ENCODE measurements at regions of chr17 and their contacts with region 1.

Region 1: GRCh38 chr17:73192894-73193701 is at the start of gene COG1:
- DNase-seq: peak; percentile 92 to 96 (median 94)
- ATAC-seq: peak; percentile 86
- H3K4me3 ChIP-seq: peak within 1 kb of the TSS; percentile 96
- H3K27ac ChIP-seq: peak within 1 kb of the TSS; percentile 98
- H3K4me1 ChIP-seq: peaks cover 4 to 17% of the 10 kb centered on the region in 2 experiments; a peak in 4 of 5 replicates
- H3K27me3 ChIP-seq: no peaks in the 10 kb centered on the region
- CTCF ChIP-seq: no peak
- EP300 ChIP-seq: no peak
- POLR2A ChIP-seq: peak; percentile 80
- RAD21 ChIP-seq: no peak
- polyA plus RNA-seq, gene COG1: 9.5 to 9.9 TPM

Region 2: DNA sequence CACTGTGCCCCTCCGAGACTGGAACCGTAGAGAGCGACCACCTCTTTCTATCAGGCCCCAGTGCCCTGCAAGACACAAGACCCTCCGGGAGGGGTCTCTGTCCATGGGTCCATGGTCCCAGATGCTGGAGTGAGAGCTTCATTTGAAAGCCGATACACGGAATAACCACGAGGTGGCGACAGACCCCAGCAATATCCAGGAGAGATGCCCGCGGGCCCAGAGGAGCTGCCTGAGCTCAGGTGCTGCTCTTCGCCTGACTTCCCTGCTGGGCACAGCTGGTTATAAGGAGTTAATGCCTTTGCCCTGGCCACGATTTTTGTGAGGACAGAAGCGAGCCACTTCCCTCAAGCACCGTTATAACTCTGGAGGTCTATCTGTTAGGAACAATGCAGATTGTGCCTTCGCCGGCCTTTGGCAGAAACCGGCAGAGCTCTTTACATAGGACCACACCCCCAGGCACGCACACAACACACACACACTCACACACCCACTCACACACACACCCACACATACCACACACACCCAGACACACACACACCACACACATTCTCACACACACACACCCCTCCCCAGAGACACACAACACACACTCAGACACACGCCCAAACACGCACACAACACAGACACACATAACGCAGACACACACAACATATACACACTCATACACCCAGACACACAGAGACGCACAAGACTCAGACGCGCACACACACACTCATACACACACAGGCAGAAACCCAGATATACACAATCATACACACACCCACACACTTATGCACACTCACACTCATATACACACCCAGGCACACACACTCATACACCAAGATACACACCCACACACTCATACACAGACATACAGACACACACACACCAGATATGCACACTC is 635.9 kb before region 1 on chr17:
- CTCF ChIA-PET with region 1: interaction called, 5 read pairs
- POLR2A ChIA-PET with region 1: interaction called, 3 read pairs
- in situ Hi-C with region 1: loop called (anchors 10 kb)
- intact Hi-C with region 1: no loop called
- DNase-seq: peak; percentile 67 to 76 (median 74)
- ATAC-seq: peak; percentile 89
- H3K4me3 ChIP-seq: no peak overlapping the region
- H3K27ac ChIP-seq: no peak overlapping the region
- H3K4me1 ChIP-seq: peaks cover 0 to 4% of the 10 kb centered on the region in 2 experiments; a peak in 1 of 5 replicates
- H3K27me3 ChIP-seq: peaks cover 0 to 7% of the 10 kb centered on the region in 2 experiments; a peak in 1 of 5 replicates
- CTCF ChIP-seq: peak; percentile 83 to 86 (median 85)
- EP300 ChIP-seq: no peak
- POLR2A ChIP-seq: no peak
- RAD21 ChIP-seq: peak; percentile 44 to 77

Region 3: DNA sequence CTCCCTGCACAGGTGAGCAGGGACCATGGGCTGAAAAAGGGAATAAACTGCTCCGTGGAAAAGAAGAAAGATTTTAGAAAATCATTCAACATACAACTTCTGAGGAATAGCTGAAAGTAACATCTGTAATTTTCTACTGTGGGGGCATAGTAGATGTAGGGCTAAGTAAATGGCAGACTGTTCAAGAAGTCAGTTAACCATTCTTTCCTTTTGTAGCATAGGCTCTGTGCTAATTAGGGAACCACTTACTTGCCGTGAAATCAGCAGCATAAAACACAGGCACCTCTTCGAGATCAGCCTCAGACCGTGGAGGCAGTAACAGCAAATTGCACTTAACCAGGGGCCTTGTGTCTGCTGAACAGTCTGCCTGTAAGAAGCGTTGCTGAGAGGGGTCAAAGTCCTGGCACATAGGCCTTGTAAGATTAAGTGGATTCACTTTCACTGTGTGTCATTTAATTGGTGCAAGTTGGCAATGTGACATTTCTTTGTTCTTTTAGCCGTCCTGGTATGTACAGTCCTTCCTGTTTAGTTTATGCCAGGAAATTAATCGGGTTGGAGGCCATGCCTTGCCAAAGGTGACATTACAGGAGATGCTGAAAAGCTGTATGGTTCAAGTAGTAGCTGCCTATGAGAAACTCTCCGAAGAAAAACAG is 10.2 kb after region 1 on chr17:
- CTCF ChIA-PET with region 1: no interaction called
- POLR2A ChIA-PET with region 1: interaction called, 15 read pairs
- in situ Hi-C with region 1: no loop called
- intact Hi-C with region 1: no loop called
- DNase-seq: no peak
- ATAC-seq: no peak
- H3K4me3 ChIP-seq: no peak overlapping the region
- H3K27ac ChIP-seq: no peak overlapping the region
- H3K4me1 ChIP-seq: peaks cover 3 to 8% of the 10 kb centered on the region in 2 experiments; a peak in 3 of 5 replicates
- H3K27me3 ChIP-seq: no peaks in the 10 kb centered on the region
- CTCF ChIP-seq: no peak
- EP300 ChIP-seq: no peak
- POLR2A ChIP-seq: no peak
- RAD21 ChIP-seq: no peak

Region 4: DNA sequence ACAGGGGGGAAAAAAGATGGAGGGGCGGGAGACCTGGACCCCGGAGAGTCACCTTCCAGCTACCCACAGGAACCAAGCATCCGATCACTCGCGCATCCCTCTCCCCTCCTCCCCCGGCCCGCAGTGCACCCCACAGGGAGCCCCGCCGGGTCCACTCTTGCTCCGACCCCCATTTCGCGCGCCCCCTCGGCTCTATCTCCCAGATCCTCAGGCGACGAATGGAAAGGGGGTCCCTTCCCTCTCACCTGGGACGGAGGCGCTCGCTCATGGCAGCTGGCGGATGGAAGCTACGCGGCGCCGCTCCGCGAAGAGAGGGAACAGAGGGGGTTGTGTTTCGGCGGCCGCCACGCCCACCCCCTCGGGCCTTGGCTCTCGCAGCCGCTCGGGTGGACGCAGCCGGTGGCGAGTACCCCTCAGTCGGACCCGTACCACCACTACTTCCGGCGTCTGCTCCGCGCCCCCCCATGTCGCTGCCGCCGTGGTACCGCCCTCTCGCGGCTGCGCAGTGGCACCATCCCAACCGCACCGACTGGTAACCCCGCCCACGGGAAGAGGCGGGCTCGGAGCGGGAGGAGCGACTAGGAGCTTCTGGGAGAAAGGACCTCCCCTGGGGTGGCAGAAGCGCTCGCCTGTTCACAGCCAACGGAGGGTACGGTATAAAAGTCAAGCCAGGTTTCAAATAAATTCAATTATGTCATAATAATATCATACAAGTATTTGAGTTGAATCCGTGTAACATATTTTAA is 38.9 kb after region 1 on chr17:
- CTCF ChIA-PET with region 1: no interaction called
- POLR2A ChIA-PET with region 1: interaction called, 6 read pairs
- in situ Hi-C with region 1: no loop called
- intact Hi-C with region 1: loop called (anchors 2 kb)
- DNase-seq: peak; percentile 96
- ATAC-seq: peak; percentile 85
- H3K4me3 ChIP-seq: peak overlapping the region; percentile 95
- H3K27ac ChIP-seq: peak overlapping the region; percentile 89
- H3K4me1 ChIP-seq: peaks cover 19 to 31% of the 10 kb centered on the region in 2 experiments
- H3K27me3 ChIP-seq: no peaks in the 10 kb centered on the region
- CTCF ChIP-seq: peak; percentile 22 to 36 (median 32); a peak in 3 of 6 replicates
- EP300 ChIP-seq: no peak
- POLR2A ChIP-seq: peak; percentile 79
- RAD21 ChIP-seq: no peak; a peak in 1 of 4 replicates

Region 5: GRCh38 chr17:73371285-73371684 is 178.2 kb after region 1 on chr17:
- CTCF ChIA-PET with region 1: interaction called, 15 read pairs
- POLR2A ChIA-PET with region 1: interaction called, 3 read pairs
- in situ Hi-C with region 1: no loop called
- intact Hi-C with region 1: loop called (anchors 5 kb)
- DNase-seq: no peak
- ATAC-seq: no peak
- H3K4me3 ChIP-seq: no peak overlapping the region
- H3K27ac ChIP-seq: no peak overlapping the region
- H3K4me1 ChIP-seq: peaks cover 2 to 9% of the 10 kb centered on the region in 2 experiments; a peak in 3 of 5 replicates
- H3K27me3 ChIP-seq: peaks cover 16 to 29% of the 10 kb centered on the region in 2 experiments
- CTCF ChIP-seq: no peak
- EP300 ChIP-seq: no peak
- POLR2A ChIP-seq: no peak
- RAD21 ChIP-seq: no peak

Region 6: GRCh38 chr17:73991254-73991653 is 798.2 kb after region 1 on chr17:
- CTCF ChIA-PET with region 1: no interaction called
- POLR2A ChIA-PET with region 1: no interaction called
- in situ Hi-C with region 1: no loop called
- intact Hi-C with region 1: no loop called
- DNase-seq: no peak
- ATAC-seq: no peak
- H3K4me3 ChIP-seq: no peak overlapping the region
- H3K27ac ChIP-seq: no peak overlapping the region
- H3K4me1 ChIP-seq: no peaks in the 10 kb centered on the region
- H3K27me3 ChIP-seq: peaks cover 13 to 48% of the 10 kb centered on the region in 2 experiments; a peak in 3 of 5 replicates
- CTCF ChIP-seq: no peak
- EP300 ChIP-seq: no peak
- POLR2A ChIP-seq: no peak
- RAD21 ChIP-seq: no peak

Measured in K562 (cell line).